Dorsolateral prefrontal cortex (tissue), 120 donors: ENCODE measurements at regions of chr11 and their contacts with region 1.

Region 1: DNA sequence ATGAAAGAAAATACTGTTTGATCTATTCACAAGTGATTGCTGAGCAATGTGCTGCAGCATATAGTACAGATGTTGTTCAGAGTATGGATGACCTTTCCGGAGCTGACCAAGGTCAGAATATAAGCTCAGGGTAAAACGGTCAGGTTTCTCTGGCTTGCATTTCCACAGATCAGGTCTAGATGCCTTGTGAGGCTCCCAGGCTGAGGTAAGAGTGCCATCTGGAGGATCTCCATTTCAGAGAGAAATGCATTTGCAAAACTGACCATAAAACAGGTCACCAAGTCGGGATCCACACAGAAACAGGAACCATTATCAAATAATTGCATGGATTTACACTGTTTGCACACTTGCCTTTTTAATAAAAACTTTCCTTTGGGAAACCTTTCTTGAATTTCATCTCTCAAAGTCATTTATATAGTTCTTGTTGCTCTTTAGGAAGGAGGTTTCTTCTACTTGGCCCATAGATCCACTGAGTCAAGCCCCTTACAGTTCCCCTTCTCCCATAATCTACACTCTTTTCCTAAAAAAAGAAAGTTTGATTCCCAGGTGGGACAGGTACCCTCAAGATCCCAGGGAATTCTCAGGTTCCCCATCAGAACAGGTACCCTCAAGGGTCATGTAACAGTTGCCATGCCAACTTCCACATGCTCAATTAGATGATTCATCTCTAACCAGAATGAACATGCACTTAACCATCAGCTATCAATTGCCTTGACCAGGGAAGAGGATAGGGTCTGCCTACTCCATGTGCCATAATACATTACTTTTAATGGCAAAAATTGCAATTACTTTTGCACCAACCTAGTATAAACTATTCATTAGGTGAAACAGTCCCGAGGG is 25.0 kb upstream of the TMPRSS5 start:
- DNase-seq: peak in 6 of 10 donors; percentile 32 to 73 (median 52)
- H3K4me3 ChIP-seq: no peak overlapping the region
- H3K27ac ChIP-seq: no peak overlapping the region
- H3K27me3 ChIP-seq: no peaks in the 10 kb centered on the region
- CTCF ChIP-seq: peak; percentile 7 to 92 (median 74)

Region 2: DNA sequence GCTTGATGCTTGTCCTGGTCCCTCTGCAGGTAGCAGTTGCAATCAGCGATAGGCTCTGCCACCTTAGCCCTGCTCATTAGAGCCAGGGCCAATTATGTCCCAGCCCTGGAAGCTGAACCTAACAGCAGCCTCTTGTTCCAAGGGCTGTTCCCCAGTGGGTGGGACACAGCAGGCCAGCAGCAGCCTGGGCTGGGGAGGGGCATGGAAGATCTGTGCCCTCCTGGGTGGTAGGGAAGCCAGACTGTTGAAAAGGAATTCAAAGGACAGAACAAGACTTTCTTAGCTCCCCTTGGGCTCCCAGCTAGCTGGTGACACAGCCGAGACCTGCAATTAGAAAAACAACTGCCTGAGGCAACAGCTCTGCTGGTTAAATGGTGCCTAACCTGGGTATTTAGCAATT is 273.3 kb before region 1 on chr11:
- intact Hi-C with region 1: no loop called
- DNase-seq: no peak
- H3K4me3 ChIP-seq: no peak overlapping the region
- H3K27ac ChIP-seq: no peak overlapping the region
- H3K27me3 ChIP-seq: peaks cover 0 to 5% (median 0%) of the 10 kb centered on the region in 45 donors
- CTCF ChIP-seq: no peak

Region 3: GRCh38 chr11:113532697-113533424 is 198.2 kb before region 1 on chr11:
- intact Hi-C with region 1: loop called (anchors 2 to 10 kb)
- DNase-seq: peak; percentile 73 to 89 (median 79)
- H3K4me3 ChIP-seq: no peak overlapping the region
- H3K27ac ChIP-seq: no peak overlapping the region
- H3K27me3 ChIP-seq: no peaks in the 10 kb centered on the region
- CTCF ChIP-seq: peak; percentile 62 to 96 (median 86)

Region 4: DNA sequence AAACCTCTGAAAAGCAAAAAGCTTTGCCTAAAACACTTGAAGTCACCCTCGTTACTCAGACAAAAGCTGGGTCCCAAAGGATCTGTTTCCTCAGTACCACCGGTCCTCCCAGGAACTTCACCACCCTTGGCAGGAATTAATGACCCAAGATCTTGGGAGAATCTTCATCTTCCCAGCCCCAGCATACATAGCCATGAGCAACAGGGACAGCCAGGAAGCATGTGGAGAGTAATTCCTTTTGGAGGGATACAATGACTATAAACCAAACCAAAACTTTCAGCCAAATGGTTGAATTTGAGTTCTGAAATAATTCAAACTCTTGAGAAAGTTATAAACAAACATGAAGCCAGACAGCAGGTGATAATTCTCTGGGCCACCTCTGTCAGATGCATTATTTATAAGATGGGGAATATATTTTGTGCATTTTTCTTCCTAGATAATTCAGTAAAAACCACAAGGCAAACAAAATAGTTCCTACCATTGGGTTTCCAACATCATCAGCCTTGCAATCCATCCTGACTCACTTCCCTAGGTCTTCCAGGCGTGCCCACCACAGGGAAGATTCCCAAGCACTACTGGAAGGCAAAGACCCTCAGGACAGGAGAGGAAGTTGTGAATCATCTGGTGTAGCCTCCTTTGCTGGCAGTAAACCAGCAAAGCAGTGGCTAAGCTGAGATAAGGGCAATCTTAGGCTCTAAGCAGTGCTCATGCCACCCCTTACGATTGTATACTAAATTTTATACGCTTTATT is 184.2 kb before region 1 on chr11:
- intact Hi-C with region 1: no loop called
- DNase-seq: no peak
- H3K4me3 ChIP-seq: no peak overlapping the region
- H3K27ac ChIP-seq: no peak overlapping the region
- H3K27me3 ChIP-seq: peaks cover 0 to 6% (median 0%) of the 10 kb centered on the region in 45 donors
- CTCF ChIP-seq: no peak